Right cardiac atrium (tissue), 5 donors: ENCODE measurements at regions of chr4 and their contacts with region 1.

Region 1: DNA sequence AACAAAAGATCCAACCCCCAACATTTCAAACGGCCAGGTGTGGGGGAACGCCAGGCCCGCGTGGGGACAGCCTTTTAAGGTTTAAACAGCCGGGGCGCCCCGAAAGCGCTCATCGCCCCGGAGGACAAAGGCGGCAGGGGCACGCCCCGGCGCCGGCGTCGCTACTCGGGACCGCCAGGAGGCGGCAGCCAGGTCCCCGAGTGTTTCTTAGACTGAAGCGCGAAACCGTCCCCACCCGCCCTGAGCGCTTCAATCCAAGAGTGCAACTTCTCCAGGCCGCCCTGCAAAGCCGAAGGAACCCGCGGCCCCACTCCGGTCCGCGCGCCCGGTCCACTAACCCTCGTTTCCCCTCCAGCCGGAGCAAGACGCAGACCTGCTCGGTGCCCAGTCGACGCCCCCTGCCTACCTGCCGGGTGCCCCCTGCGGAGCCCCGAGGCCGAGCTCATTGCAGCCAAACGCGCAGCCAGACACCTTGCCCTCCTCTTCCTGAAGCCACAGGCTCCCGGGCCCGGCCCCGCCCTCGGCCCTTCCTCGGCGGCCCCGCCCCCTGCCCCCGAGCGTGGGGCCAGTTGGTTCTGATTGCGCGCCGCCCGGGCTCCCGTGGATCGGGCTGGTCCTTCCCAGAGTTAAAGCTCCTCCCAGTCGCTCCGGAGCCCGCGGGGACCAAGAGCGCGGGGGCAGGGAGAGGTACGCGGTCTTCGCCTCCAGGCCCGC is at the start of gene CASP6:
- DNase-seq: peak; percentile 90 to 97 (median 95)
- ATAC-seq: peak; percentile 98
- H3K4me3 ChIP-seq: peak within 1 kb of the TSS; percentile 76
- H3K27ac ChIP-seq: peak within 1 kb of the TSS; percentile 73
- H3K4me1 ChIP-seq: peaks cover 6% of the 10 kb centered on the region
- H3K27me3 ChIP-seq: no peaks in the 10 kb centered on the region
- total RNA-seq, gene CASP6: 6.5 to 13.4 (median 8.7) TPM

Region 2: DNA sequence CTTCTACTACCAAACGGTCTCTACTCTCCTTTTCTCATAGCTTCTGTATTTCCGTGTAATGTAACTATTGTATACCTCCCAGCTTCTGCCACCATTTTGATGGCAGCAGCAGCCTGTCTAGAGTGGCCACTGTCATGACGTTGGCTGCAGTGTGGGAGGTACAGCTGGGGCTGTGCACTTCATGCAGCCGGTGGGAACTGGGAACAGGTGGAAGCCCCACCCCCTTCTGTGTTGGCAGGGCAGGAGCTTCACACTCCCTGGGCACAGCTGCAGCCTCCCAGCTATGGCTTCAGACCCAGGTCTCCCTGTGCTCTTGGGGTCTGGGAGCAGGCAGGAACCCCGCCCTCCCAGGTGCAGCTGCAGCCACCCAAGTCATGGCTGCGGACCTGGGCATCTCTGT is 319.3 kb before region 1 on chr4:
- intact Hi-C with region 1: no loop called
- DNase-seq: no peak
- ATAC-seq: peak in 1 of 2 donors; percentile 22
- H3K4me3 ChIP-seq: no peak overlapping the region
- H3K27ac ChIP-seq: no peak overlapping the region
- H3K4me1 ChIP-seq: no peaks in the 10 kb centered on the region
- H3K27me3 ChIP-seq: no peaks in the 10 kb centered on the region

Region 3: GRCh38 chr4:109764376-109764775 is 61.3 kb after region 1 on chr4:
- intact Hi-C with region 1: no loop called
- DNase-seq: peak; percentile 27 to 75 (median 60)
- ATAC-seq: peak in 1 of 2 donors; percentile 70
- H3K4me3 ChIP-seq: no peak overlapping the region
- H3K27ac ChIP-seq: no peak overlapping the region
- H3K4me1 ChIP-seq: no peaks in the 10 kb centered on the region
- H3K27me3 ChIP-seq: no peaks in the 10 kb centered on the region

Region 4: GRCh38 chr4:109815151-109816081 is 112.3 kb after region 1 on chr4 and contains the start of gene GAR1:
- intact Hi-C with region 1: loop called in 3 of 4 experiments (anchors 10 kb)
- DNase-seq: peak; percentile 92 to 96 (median 93)
- ATAC-seq: peak; percentile 99
- H3K4me3 ChIP-seq: peak within 1 kb of the TSS; percentile 83
- H3K27ac ChIP-seq: peak within 1 kb of the TSS; percentile 45
- H3K4me1 ChIP-seq: no peaks in the 10 kb centered on the region
- H3K27me3 ChIP-seq: no peaks in the 10 kb centered on the region
- total RNA-seq, gene GAR1: 6.5 to 10.1 (median 8.7) TPM

Region 5: DNA sequence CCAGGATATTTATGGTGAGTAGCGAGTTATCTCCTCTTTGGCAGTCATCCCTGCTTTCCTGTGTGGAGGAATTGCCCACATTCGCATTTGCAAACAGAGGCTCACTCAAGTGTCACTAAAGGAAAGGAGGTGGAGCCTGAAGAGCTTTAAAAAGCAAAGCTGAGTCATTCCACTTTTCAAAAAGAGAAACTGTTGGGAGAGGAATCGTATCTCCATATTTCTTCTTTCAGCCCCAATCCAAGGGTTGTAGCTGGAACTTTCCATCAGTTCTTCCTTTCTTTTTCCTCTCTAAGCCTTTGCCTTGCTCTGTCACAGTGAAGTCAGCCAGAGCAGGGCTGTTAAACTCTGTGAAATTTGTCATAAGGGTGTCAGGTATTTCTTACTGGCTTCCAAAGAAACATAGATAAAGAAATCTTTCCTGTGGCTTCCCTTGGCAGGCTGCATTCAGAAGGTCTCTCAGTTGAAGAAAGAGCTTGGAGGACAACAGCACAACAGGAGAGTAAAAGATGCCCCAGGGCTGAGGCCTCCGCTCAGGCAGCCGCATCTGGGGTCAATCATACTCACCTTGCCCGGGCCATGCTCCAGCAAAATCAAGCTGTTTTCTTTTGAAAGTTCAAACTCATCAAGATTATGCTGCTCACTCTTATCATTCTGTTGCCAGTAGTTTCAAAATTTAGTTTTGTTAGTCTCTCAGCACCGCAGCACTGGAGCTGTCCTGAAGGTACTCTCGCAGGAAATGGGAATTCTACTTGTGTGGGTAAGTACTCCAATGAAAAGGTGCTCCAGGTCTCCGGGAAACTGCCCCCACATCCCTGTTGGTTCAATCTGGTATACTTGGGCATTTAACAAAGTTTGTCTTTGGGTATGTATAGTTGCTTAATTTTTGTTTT is 209.8 kb after region 1 on chr4 and contains the start of gene EGF:
- intact Hi-C with region 1: no loop called
- DNase-seq: peak in 1 of 3 donors; percentile 37
- ATAC-seq: peak; percentile 82 to 85
- H3K4me3 ChIP-seq: peak within 1 kb of the TSS; percentile 63
- H3K27ac ChIP-seq: peak within 1 kb of the TSS; percentile 85
- H3K4me1 ChIP-seq: no peaks in the 10 kb centered on the region
- H3K27me3 ChIP-seq: no peaks in the 10 kb centered on the region
- total RNA-seq, gene EGF: 8.8 to 17.8 (median 13.6) TPM